ENCODE measurements at regions of chr18 and their contacts with region 1.

Region 1: GRCh38 chr18:37385846-37386778 is 179.5 kb downstream of the CELF4 start:
- DNase-seq: no peak
- ATAC-seq: no peak
- H3K4me3 Mint-ChIP-seq: no peak overlapping the region
- H3K27ac Mint-ChIP-seq: no peak overlapping the region
- H3K4me1 Mint-ChIP-seq: no peaks in the 10 kb centered on the region
- H3K27me3 Mint-ChIP-seq: no peaks in the 10 kb centered on the region
- CTCF ChIP-seq: peak; percentile 68

Region 2: GRCh38 chr18:37465958-37466357 is 79.8 kb after region 1 on chr18:
- CTCF ChIA-PET with region 1: no interaction called
- POLR2A ChIA-PET with region 1: no interaction called
- intact Hi-C with region 1: no loop called
- DNase-seq: no peak
- ATAC-seq: no peak
- H3K4me3 Mint-ChIP-seq: no peak overlapping the region
- H3K27ac Mint-ChIP-seq: no peak overlapping the region
- H3K4me1 Mint-ChIP-seq: no peaks in the 10 kb centered on the region
- H3K27me3 Mint-ChIP-seq: no peaks in the 10 kb centered on the region
- CTCF ChIP-seq: no peak

Region 3: DNA sequence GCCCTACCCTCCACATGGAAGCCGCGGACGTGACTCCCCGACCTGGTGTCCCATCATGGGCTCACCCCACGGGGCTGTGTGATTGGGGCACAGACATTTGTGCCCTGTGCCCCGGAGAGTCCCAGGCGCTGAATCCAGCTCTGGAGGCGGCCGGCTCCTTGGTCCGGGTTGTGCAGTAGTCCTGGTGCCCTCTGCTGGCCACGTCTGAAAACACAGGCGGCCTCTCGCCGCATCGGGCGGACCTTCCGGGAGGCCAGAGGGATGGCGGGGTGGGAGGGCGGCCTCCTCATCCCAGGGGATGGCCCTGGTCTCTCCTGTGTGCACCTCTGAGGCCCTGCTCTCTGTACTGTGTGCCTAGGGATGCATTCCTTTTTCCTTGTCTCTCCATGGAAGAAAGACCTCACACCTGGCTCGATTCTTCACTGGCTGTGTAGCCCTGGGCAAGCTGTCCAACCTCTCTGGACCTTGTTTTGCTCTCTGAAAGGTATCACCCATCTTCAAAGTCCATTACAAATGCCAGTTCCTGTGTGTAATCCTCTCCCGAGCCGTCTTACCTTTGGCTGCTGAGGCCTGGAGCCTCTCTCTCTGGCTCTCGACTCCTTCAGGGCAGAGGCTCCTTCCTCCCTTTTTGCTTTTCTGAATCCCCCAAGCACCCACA is 151.9 kb after region 1 on chr18:
- CTCF ChIA-PET with region 1: interaction called, 4 read pairs
- POLR2A ChIA-PET with region 1: no interaction called
- intact Hi-C with region 1: loop called (anchors 1 kb)
- DNase-seq: peak; percentile 20
- ATAC-seq: peak; percentile 52
- H3K4me3 Mint-ChIP-seq: no peak overlapping the region
- H3K27ac Mint-ChIP-seq: no peak overlapping the region
- H3K4me1 Mint-ChIP-seq: peaks cover 6% of the 10 kb centered on the region
- H3K27me3 Mint-ChIP-seq: peaks cover 23% of the 10 kb centered on the region
- CTCF ChIP-seq: no peak